CD4-positive, alpha-beta T cell (primary cell): ENCODE measurements at regions of chr3 and their contacts with region 1.

Region 1: GRCh38 chr3:161423911-161424522 is 52.7 kb upstream of the SPTSSB start:
- DNase-seq: peak in 3 of 14 experiments; percentile 53 to 67 (median 63)
- ATAC-seq: no peak
- H3K4me3 ChIP-seq: no peak overlapping the region
- H3K4me3 Mint-ChIP-seq: no peak overlapping the region
- H3K27ac ChIP-seq: no peak overlapping the region
- H3K27ac Mint-ChIP-seq: no peak overlapping the region
- H3K4me1 ChIP-seq: no peaks in the 10 kb centered on the region
- H3K4me1 Mint-ChIP-seq: peaks cover 7% of the 10 kb centered on the region
- H3K27me3 ChIP-seq: no peaks in the 10 kb centered on the region
- H3K27me3 Mint-ChIP-seq: no peaks in the 10 kb centered on the region
- CTCF ChIP-seq: peak; percentile 92

Region 2: GRCh38 chr3:160707187-160707794 is 716.7 kb before region 1 on chr3:
- CTCF ChIA-PET with region 1: no interaction called
- POLR2A ChIA-PET with region 1: no interaction called
- intact Hi-C with region 1: loop called (anchors 1 to 5 kb)
- DNase-seq: peak in 10 of 14 experiments; percentile 2 to 73 (median 21)
- ATAC-seq: no peak
- H3K4me3 ChIP-seq: no peak overlapping the region
- H3K4me3 Mint-ChIP-seq: no peak overlapping the region
- H3K27ac ChIP-seq: no peak overlapping the region
- H3K27ac Mint-ChIP-seq: no peak overlapping the region
- H3K4me1 ChIP-seq: no peaks in the 10 kb centered on the region
- H3K4me1 Mint-ChIP-seq: no peaks in the 10 kb centered on the region
- H3K27me3 ChIP-seq: peaks cover 11 to 27% of the 10 kb centered on the region in 2 experiments
- H3K27me3 Mint-ChIP-seq: peaks cover 46% of the 10 kb centered on the region
- CTCF ChIP-seq: peak; percentile 78

Region 3: GRCh38 chr3:160941885-160942494 is 482.0 kb before region 1 on chr3:
- CTCF ChIA-PET with region 1: no interaction called
- POLR2A ChIA-PET with region 1: no interaction called
- intact Hi-C with region 1: loop called (anchors 5 to 10 kb)
- DNase-seq: peak; percentile 7 to 79 (median 60)
- ATAC-seq: peak; percentile 57
- H3K4me3 ChIP-seq: no peak overlapping the region
- H3K4me3 Mint-ChIP-seq: no peak overlapping the region
- H3K27ac ChIP-seq: no peak overlapping the region
- H3K27ac Mint-ChIP-seq: no peak overlapping the region
- H3K4me1 ChIP-seq: no peaks in the 10 kb centered on the region
- H3K4me1 Mint-ChIP-seq: peaks cover 4% of the 10 kb centered on the region
- H3K27me3 ChIP-seq: no peaks in the 10 kb centered on the region
- H3K27me3 Mint-ChIP-seq: no peaks in the 10 kb centered on the region
- CTCF ChIP-seq: peak; percentile 85

Region 4: GRCh38 chr3:161096771-161097355 is 327.2 kb before region 1 on chr3:
- CTCF ChIA-PET with region 1: interaction called, 5 read pairs
- POLR2A ChIA-PET with region 1: no interaction called
- intact Hi-C with region 1: loop called (anchors 1 to 2 kb)
- DNase-seq: peak in 5 of 14 experiments; percentile 12 to 41 (median 36)
- ATAC-seq: no peak
- H3K4me3 ChIP-seq: no peak overlapping the region
- H3K4me3 Mint-ChIP-seq: no peak overlapping the region
- H3K27ac ChIP-seq: no peak overlapping the region
- H3K27ac Mint-ChIP-seq: no peak overlapping the region
- H3K4me1 ChIP-seq: no peaks in the 10 kb centered on the region
- H3K4me1 Mint-ChIP-seq: no peaks in the 10 kb centered on the region
- H3K27me3 ChIP-seq: no peaks in the 10 kb centered on the region
- H3K27me3 Mint-ChIP-seq: no peaks in the 10 kb centered on the region
- CTCF ChIP-seq: peak; percentile 39

Region 5: GRCh38 chr3:161274719-161275298 is 149.2 kb before region 1 on chr3:
- CTCF ChIA-PET with region 1: no interaction called
- POLR2A ChIA-PET with region 1: no interaction called
- intact Hi-C with region 1: loop called (anchors 1 kb)
- DNase-seq: peak in 7 of 14 experiments; percentile 2 to 66 (median 45)
- ATAC-seq: no peak
- H3K4me3 ChIP-seq: no peak overlapping the region
- H3K4me3 Mint-ChIP-seq: no peak overlapping the region
- H3K27ac ChIP-seq: no peak overlapping the region
- H3K27ac Mint-ChIP-seq: no peak overlapping the region
- H3K4me1 ChIP-seq: no peaks in the 10 kb centered on the region
- H3K4me1 Mint-ChIP-seq: peaks cover 10% of the 10 kb centered on the region
- H3K27me3 ChIP-seq: no peaks in the 10 kb centered on the region
- H3K27me3 Mint-ChIP-seq: no peaks in the 10 kb centered on the region
- CTCF ChIP-seq: peak; percentile 50

Region 6: DNA sequence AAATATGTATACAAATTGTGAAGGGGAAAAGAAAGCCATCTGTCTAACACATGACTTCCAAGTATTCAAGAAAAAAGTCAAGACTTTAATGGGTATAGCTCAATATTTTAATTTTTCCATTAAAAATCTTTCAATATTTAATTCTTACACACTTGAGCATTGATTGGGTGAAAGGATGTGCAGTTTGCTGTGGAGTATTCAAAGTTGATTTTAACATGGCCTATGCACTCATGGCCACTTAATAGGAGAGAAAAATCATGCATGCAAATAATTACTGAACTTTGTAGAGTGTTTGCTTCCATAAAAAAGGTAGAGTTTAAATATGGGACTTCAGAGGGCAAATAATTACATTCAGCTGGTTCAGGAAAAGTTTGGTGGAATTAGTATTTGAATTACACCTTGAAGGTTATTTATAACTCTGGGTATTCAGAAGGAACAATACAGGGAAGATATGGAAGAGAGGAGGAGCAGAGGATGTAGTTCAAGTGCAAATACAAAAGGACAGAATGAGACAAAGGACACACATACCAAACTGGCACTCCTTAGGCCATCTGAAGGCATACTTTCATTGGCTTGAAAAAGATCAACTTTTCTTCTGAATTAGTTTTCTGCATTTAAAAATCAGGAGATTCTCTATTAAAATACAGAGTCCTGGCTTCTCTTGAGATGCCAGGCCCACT is 162.7 kb after region 1 on chr3:
- CTCF ChIA-PET with region 1: no interaction called
- POLR2A ChIA-PET with region 1: no interaction called
- intact Hi-C with region 1: no loop called
- DNase-seq: no peak
- ATAC-seq: no peak
- H3K4me3 ChIP-seq: no peak overlapping the region
- H3K4me3 Mint-ChIP-seq: no peak overlapping the region
- H3K27ac ChIP-seq: no peak overlapping the region
- H3K27ac Mint-ChIP-seq: no peak overlapping the region
- H3K4me1 ChIP-seq: no peaks in the 10 kb centered on the region
- H3K4me1 Mint-ChIP-seq: no peaks in the 10 kb centered on the region
- H3K27me3 ChIP-seq: no peaks in the 10 kb centered on the region
- H3K27me3 Mint-ChIP-seq: no peaks in the 10 kb centered on the region
- CTCF ChIP-seq: no peak